BJ (cell line): ENCODE measurements at regions of chr2 and their contacts with region 1.

Region 1: DNA sequence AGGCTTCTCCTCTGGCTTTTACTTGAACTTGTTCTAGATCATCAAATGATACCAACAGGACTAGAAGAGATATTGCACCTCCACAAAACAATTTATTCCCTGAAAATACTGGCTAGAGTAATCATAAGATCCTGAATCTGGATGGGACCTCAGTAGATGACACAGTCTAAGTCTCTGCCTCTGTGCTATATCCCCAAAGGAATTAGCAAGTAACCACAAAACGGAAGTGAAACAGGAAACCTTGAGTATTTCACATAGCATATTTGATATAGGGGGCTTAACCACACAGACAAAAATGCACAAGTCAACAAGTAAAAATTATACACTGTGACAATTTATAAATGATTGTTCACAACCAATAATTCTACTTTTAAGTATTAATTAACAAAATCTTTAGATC is 456.9 kb upstream of the TNP1 start:
- DNase-seq: no peak
- H3K4me3 ChIP-seq: no peak overlapping the region
- H3K27me3 ChIP-seq: no peaks in the 10 kb centered on the region
- CTCF ChIP-seq: no peak

Region 2: DNA sequence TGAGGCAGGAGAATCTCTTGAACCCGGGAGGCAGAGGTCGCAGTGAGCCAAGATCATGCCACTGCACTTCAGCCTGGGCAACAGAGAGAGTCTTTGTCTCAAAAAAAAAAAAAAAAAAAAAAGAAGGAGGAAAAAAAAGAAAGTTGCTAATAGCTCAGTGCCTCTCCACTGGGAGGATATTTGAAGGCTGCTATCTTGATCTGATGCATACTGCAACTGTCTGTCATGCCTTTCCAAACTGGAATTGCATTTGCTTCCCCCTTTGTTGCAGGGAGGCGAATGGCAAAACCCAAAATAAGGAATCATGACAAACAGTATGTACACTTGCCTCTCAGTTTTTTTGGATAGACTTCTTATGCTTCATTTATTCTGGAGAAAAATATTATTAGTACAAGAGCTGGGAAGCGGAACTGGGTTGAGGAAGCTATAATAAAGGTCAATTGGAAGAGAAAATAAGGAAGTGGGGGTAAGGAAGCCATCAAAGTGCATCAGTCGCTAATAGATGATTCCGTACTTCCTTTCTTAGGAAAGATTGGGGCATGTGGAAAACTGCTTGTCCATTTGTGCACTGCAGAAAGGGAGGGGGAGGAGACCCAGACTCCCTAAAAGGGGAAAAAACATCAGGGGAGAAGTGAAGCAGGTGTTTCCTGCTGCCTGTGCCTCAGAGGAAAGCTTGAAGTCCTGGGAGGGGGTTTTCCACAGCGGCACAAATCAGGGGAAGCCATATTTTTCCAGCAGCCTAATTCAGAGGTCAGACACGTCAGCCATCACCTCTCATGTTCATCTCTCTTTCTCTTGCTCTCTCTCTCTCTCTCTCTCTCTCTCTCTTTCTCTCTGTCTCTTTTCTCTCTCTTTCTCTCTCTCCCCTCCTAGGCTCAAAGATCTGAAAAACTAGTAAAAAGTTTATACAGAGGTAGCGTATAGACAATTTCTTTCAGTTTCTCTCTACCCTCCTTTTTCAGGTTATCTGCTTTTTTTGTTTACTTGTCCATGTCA is 155.5 kb before region 1 on chr2:
- CTCF ChIA-PET with region 1: interaction called, 4 read pairs
- POLR2A ChIA-PET with region 1: interaction called, 17 read pairs
- DNase-seq: no peak
- H3K4me3 ChIP-seq: no peak overlapping the region
- H3K27me3 ChIP-seq: no peaks in the 10 kb centered on the region; the same call in 1 of the 2 replicates
- CTCF ChIP-seq: no peak